Heart right ventricle (tissue), 16 donors: ENCODE measurements at regions of chr6 and their contacts with region 1.

Region 1: GRCh38 chr6:44475779-44476434 is 88.4 kb downstream of the CDC5L start:
- DNase-seq: peak; percentile 69 to 80
- ATAC-seq: peak; percentile 77 to 90 (median 87)
- H3K4me3 ChIP-seq: peak overlapping the region in 1 of 10 donors; percentile 20
- H3K27ac ChIP-seq: peak overlapping the region in 3 of 10 donors; percentile 22 to 43 (median 26)
- H3K4me1 ChIP-seq: peaks cover 6 to 35% (median 18%) of the 10 kb centered on the region in 9 donors
- H3K27me3 ChIP-seq: peaks cover 0 to 4% (median 0%) of the 10 kb centered on the region in 7 donors
- CTCF ChIP-seq: peak; percentile 63 to 96 (median 95)

Region 2: DNA sequence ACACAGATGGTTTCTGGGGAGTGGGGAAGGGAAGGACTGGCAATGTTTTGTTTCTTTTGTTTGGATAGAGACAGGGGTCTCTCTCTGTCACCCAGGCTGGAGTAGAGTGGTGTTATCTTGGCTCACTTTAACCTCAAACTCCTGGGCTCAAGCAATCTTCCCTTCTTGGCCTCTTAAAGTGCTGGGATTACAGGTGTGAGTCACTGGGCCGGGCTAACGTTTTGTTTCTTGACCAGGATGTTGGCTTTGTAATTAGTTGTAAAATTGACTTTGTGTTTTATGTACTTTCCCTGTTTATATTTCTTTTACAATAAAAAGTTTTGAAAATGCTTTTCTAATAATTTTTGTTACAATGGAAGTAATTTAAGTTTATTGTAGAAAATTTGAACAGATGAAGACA is 122.6 kb before region 1 on chr6:
- intact Hi-C with region 1: no loop called
- DNase-seq: no peak
- ATAC-seq: no peak
- H3K4me3 ChIP-seq: no peak overlapping the region
- H3K27ac ChIP-seq: no peak overlapping the region
- H3K4me1 ChIP-seq: no peaks in the 10 kb centered on the region
- H3K27me3 ChIP-seq: peaks cover 0 to 7% (median 0%) of the 10 kb centered on the region in 7 donors
- CTCF ChIP-seq: no peak

Region 3: GRCh38 chr6:44642870-44643529 is 167.1 kb after region 1 on chr6:
- intact Hi-C with region 1: loop called in 7 of 10 experiments (anchors 1 to 10 kb)
- DNase-seq: no peak
- ATAC-seq: no peak
- H3K4me3 ChIP-seq: no peak overlapping the region
- H3K27ac ChIP-seq: no peak overlapping the region
- H3K4me1 ChIP-seq: no peaks in the 10 kb centered on the region
- H3K27me3 ChIP-seq: no peaks in the 10 kb centered on the region
- CTCF ChIP-seq: no peak

Region 4: DNA sequence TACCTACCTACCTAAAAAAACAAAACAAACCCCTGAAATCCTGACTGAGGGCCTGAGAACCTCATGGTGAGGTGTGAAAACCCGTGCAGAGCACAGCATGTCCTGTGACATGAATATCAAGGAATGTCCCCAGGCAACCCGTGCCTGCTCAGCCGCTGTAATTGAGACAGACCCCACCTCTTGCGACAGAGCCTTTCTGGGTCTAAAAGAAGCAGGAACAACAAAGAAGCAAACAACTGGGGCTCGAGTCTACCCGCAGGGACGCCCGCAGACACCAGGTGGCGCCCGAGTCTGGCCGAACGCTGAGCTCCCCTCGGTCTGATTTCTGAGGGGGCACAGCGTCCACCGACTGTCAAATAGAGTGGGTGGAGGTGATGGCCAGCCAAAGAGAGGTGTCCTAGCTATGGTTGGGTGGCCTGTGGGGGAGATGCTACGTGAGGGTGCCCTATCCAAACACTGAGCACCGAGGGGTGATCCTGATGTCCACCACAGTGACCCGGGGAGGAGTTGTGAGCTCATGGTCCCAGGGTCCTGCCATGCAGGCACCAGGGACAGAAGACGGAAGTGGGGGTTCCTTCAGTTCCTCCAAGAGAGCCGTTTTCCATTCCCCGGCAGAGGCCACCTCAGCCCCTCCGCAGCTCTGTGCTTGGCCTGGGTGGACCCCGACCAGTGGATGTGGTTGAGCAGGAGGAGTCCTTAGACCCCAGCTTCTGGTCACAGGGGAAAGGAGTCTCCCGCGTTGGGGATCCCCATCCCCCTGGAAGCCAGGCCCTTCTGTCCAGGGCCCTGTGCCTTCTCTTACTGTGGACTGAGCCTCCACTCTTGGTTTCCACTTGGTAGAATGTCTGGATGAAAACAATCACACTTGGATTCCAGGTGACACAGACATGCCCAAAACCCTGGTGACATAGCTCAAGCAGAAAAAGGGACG is 179.8 kb after region 1 on chr6:
- intact Hi-C with region 1: loop called in 1 of 10 experiments (anchors 10 kb)
- DNase-seq: peak; percentile 60 to 74
- ATAC-seq: peak; percentile 54 to 87 (median 74)
- H3K4me3 ChIP-seq: no peak overlapping the region
- H3K27ac ChIP-seq: peak overlapping the region in 1 of 10 donors; percentile 43
- H3K4me1 ChIP-seq: peaks cover 0 to 8% (median 3%) of the 10 kb centered on the region in 9 donors
- H3K27me3 ChIP-seq: peaks cover 0 to 9% (median 0%) of the 10 kb centered on the region in 7 donors
- CTCF ChIP-seq: peak; percentile 76 to 98 (median 96)

Region 5: GRCh38 chr6:45714741-45715507 is 1239.0 kb after region 1 on chr6:
- intact Hi-C with region 1: loop called in 8 of 10 experiments (anchors 5 to 10 kb)
- DNase-seq: peak in 1 of 2 donors; percentile 67
- ATAC-seq: peak; percentile 86 to 97 (median 93)
- H3K4me3 ChIP-seq: no peak overlapping the region
- H3K27ac ChIP-seq: no peak overlapping the region
- H3K4me1 ChIP-seq: peaks cover 0 to 16% (median 0%) of the 10 kb centered on the region in 9 donors
- H3K27me3 ChIP-seq: peaks cover 0 to 6% (median 3%) of the 10 kb centered on the region in 7 donors
- CTCF ChIP-seq: peak; percentile 65 to 92 (median 82)

Region 6: DNA sequence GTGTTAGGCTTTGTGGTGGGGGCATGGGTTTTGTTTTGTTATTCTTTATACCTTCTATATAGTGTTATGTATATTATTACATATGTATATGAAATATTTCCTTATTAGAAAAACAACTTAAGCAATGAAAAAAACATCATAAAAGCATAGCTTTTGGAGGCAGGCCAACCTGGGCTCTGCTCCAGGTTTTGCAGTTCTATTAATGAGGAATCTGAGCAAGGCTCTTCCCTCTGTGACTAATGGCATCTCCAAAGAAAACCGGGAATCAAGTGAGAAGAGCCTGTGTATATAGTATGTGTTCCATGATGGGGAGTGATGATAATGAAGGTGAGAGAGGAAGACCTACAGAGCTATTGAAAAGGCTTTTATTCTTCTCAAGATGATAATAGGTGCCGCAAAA is 1248.6 kb after region 1 on chr6:
- intact Hi-C with region 1: loop called in 5 of 10 experiments (anchors 5 to 10 kb)
- DNase-seq: peak in 1 of 2 donors; percentile 13
- ATAC-seq: peak in 1 of 8 donors; percentile 24
- H3K4me3 ChIP-seq: no peak overlapping the region
- H3K27ac ChIP-seq: no peak overlapping the region
- H3K4me1 ChIP-seq: no peaks in the 10 kb centered on the region
- H3K27me3 ChIP-seq: no peaks in the 10 kb centered on the region
- CTCF ChIP-seq: no peak

Region 7: GRCh38 chr6:45922728-45923351 is 1446.9 kb after region 1 on chr6:
- intact Hi-C with region 1: loop called in 5 of 10 experiments (anchors 5 to 10 kb)
- DNase-seq: peak; percentile 45 to 54
- ATAC-seq: peak; percentile 58 to 85 (median 76)
- H3K4me3 ChIP-seq: no peak overlapping the region
- H3K27ac ChIP-seq: peak overlapping the region in 3 of 10 donors; percentile 3 to 21 (median 9)
- H3K4me1 ChIP-seq: peaks cover 0 to 47% (median 41%) of the 10 kb centered on the region in 9 donors
- H3K27me3 ChIP-seq: no peaks in the 10 kb centered on the region
- CTCF ChIP-seq: peak; percentile 36 to 75 (median 67)